Right cardiac atrium (tissue), 5 donors: ENCODE measurements at regions of chr21 and their contacts with region 1.

Region 1: DNA sequence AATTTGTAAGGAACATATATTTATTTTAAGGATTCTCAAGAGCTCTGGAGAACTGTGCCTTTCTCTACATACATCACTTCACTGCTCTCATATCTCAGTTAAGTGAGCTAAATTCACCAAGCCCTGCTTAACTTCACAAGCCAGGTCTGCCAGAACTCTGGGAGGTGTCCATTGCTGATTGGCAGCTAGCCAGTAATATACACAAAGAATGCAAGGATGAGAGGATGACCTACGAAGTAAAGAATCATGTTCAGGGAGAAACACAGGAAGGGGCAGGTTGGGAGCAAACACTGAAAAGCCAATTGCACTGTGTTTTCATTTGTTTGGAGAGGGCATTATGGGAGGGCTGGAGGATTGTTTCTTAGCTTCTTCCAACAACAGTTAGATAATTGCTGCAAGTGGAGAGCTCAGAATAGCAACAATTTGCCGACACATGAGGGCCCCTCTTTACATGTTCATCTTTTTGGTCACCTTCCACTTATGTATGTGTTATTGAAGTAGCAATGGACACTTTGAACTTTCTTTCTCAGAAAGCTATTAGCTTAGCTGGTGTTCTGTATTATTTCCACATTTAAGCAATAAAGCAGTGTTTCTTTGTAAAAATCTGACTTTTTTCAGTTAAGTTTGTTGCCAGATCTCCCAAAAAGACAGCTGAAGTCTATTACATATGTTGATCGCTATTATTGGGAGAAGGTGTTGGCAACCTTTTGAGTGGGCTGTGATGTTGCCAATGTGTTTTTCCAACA is 254.8 kb downstream of the LTN1 start:
- DNase-seq: no peak
- ATAC-seq: peak; percentile 57 to 81
- H3K4me3 ChIP-seq: no peak overlapping the region
- H3K27ac ChIP-seq: peak overlapping the region; percentile 63
- H3K4me1 ChIP-seq: peaks cover 1% of the 10 kb centered on the region
- H3K27me3 ChIP-seq: no peaks in the 10 kb centered on the region

Region 2: DNA sequence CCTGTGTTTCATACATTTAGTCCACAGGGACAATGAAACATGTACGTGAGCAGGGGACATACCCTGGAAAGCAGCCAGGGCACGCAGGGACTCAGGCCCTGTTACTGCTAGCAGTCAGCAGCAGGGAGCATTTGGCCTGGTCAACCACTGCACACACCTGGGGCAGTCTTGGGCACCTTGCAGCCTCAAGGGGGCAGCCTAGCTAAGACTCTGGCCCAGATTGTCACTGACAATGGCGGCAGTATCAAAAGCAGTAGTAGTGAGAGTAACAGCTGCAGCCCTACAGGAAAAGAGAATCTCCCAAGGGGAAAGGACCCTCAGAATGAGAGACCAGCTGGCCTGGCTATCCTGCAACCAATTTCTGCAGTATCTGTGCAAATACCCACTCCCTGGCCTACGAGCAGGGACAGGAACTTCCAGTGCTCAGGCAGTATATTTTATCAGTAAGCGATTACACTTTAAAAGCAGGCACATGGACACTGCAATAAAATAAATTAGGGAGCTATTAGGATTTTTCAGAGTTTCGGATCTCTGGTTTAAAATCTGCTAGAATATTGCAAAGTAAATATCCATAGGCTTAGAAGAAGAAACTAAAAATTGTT is 220.8 kb before region 1 on chr21:
- intact Hi-C with region 1: loop called (anchors 5 to 10 kb)
- DNase-seq: peak; percentile 56 to 88 (median 83)
- ATAC-seq: peak; percentile 82 to 95
- H3K4me3 ChIP-seq: no peak overlapping the region
- H3K27ac ChIP-seq: peak overlapping the region; percentile 57
- H3K4me1 ChIP-seq: no peaks in the 10 kb centered on the region
- H3K27me3 ChIP-seq: no peaks in the 10 kb centered on the region